ENCODE measurements at regions of chr6 and their contacts with region 1.

Region 1: DNA sequence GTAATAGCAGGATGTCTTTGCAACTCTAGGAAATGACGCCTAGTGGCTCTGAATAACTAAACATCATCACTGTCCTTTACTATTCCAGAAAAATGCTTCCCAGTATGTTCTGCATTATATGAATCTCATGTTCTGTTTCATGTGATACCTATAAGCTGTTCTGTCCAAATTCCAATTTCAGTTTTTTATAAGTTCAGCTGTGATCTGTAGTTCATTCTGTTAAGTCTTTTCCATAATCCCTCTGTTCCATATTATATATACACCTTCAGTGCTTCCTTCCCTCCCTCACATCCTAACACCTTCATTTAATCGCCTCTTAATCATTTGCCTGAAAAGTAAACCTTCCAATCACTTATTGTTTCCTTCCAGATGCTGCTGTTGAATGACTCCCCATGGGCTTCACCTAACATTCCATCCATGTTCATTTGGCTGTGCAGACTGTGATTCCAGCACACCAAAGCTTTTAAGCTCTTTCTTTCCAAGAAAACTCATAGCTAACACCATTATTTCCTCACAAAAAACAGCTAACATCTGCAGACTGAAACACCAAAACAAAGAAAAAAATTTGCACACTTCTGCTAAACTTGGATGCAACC is 18.6 kb downstream of the HMGCLL1 start:
- DNase-seq: no peak

Region 2: DNA sequence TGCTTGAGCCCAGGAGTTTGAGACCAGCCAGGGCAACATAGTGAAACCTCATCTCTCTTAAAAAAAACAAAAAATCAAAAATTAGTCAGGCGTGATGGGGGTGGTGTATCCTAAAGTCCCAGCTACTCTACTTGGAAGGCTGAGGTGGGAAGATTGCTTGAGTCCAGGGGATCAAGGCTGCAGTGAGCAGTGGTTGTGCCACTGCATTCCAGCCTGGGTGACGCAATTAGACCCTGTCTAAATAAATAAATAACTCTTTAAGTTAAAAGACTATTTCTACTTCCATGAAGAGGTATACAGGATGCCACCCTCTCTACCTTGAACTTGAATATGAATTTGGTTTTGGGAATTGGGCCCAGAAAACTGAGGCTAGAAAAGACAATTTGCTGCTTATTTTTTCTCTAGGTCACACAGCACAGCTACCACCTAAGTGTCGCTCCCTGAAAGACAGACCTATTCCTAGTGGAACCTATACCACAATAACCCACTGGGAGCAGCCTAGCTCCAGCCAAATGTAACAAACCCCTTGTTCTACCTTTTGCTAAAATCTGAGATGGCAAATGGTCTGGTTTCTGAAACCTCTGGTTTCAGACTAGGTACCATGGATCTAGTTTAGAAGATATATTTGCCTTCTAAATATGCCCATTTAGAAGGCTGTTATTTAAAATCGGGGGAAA is 16.6 kb before region 1 on chr6:
- intact Hi-C with region 1: loop called in 1 of 2 experiments (anchors 2 kb)
- DNase-seq: no peak

Region 3: GRCh38 chr6:56091159-56091869 is 530.9 kb after region 1 on chr6:
- intact Hi-C with region 1: no loop called
- DNase-seq: no peak

Measured in posterior vena cava (tissue), 2 donors.